Activated B cell treated with CpG ODN at 0.5 μM for 24 hours (primary cell): ENCODE measurements at regions of chr4 and their contacts with region 1.

Region 1: DNA sequence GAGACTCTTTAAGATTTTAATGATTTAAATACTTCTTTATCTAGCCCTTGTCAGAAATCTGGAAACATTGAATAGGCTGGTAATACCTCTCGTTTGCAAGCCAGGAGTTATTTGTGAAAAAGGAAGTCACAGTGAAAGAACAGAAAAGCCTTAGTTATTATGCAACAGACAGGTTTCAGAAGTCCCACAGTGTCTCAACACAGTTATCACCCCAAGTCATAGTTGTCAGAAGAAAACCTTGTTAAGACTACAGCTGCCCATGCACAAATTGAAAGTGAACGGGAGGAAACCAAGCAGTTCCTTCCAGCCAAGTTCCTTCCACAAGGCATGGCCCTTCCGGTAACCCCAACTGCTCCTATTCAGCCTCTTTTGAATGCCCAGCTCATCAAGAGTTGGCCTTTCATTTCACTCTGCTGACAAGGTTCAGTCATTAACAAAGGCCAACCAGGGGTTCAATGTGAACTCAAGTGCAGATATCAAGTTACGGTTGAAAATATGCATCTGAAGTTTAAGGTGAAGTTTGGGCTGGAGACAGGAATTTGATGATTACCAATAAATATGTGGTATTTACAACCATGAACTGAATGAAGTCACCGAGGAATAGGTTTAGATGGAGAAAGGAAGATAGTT is 15.6 kb downstream of the ALPK1 start:
- DNase-seq: no peak
- ATAC-seq: peak; percentile 87
- H3K4me3 Mint-ChIP-seq: no peak overlapping the region
- H3K27ac Mint-ChIP-seq: no peak overlapping the region
- H3K4me1 Mint-ChIP-seq: peaks cover 19% of the 10 kb centered on the region
- H3K27me3 Mint-ChIP-seq: no peaks in the 10 kb centered on the region
- CTCF ChIP-seq: no peak

Region 2: DNA sequence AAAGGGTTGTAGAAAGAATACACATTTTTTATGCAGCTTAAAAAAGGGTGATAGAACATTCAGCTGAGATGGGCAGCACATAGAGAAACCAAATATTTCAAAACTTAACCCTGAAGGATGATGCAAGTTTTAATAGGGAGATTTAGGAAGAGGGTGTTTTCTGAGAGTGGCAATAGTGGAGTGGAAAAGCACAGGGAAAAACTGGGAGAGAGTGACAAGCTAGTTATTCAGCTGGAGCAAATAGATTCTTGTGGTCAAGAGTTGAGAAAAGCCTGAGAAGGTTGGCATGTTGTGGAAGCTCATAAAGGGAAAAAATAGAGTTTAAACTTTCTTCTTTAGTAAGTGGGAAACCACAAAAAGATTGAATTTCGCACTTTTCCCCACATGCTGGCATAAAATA is 1330.2 kb before region 1 on chr4:
- CTCF ChIA-PET with region 1: no interaction called
- POLR2A ChIA-PET with region 1: no interaction called
- intact Hi-C with region 1: no loop called
- DNase-seq: no peak
- ATAC-seq: no peak
- H3K4me3 Mint-ChIP-seq: no peak overlapping the region
- H3K27ac Mint-ChIP-seq: no peak overlapping the region
- H3K4me1 Mint-ChIP-seq: no peaks in the 10 kb centered on the region
- H3K27me3 Mint-ChIP-seq: no peaks in the 10 kb centered on the region
- CTCF ChIP-seq: no peak

Region 3: DNA sequence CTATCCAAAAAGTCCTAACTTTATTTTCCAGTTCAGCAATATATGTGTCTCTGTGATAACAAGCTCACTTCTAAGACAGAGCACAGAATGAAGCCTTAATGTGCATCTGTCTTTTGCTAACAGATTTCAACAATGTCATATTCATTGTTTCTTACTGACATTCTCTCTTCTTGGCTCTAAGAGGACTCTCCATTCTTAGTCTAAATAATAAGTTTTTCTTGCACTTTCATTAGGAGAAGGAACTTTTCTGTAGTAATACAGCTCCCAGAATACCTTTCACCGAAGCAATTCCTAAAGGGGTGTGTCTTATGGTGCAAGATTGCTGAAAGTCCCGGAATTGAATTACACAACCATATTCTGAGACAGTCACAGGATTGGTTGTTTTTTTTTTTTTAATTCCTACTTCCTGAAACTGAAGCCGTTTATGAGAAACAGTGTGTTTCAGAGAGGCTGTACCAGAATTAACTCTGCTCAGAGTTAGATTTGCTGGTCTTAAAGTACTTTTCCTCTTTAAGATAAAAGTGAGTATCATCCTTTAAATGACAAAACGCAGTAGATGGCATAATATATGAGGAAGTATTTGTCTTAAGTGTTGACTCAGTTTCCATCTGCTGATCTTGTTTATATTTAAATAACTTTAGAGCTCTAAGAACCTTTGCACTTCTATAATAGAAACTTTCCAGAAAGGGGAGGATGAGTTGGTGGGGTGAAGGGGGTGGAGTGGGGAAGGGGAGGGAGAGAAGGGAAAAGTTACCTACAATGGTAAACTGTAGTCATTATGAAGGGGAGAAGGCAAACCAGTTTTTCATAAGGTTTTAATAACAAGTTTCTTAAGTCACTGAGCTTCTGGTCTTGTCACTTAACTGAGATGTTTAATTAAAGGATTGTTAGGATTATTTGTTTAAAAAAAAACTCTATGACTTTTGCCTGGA is 15.5 kb before region 1 on chr4 and contains the start of gene ALPK1:
- CTCF ChIA-PET with region 1: no interaction called
- POLR2A ChIA-PET with region 1: interaction called, 7 read pairs
- intact Hi-C with region 1: loop called (anchors 1 kb)
- DNase-seq: no peak
- ATAC-seq: peak; percentile 94
- H3K4me3 Mint-ChIP-seq: peak within 1 kb of the TSS; percentile 85
- H3K27ac Mint-ChIP-seq: peak within 1 kb of the TSS; percentile 85
- H3K4me1 Mint-ChIP-seq: peaks cover 23% of the 10 kb centered on the region
- H3K27me3 Mint-ChIP-seq: no peaks in the 10 kb centered on the region
- CTCF ChIP-seq: no peak
- total RNA-seq, gene ALPK1: 23.1 and 26.7 TPM in 2 replicates

Region 4: DNA sequence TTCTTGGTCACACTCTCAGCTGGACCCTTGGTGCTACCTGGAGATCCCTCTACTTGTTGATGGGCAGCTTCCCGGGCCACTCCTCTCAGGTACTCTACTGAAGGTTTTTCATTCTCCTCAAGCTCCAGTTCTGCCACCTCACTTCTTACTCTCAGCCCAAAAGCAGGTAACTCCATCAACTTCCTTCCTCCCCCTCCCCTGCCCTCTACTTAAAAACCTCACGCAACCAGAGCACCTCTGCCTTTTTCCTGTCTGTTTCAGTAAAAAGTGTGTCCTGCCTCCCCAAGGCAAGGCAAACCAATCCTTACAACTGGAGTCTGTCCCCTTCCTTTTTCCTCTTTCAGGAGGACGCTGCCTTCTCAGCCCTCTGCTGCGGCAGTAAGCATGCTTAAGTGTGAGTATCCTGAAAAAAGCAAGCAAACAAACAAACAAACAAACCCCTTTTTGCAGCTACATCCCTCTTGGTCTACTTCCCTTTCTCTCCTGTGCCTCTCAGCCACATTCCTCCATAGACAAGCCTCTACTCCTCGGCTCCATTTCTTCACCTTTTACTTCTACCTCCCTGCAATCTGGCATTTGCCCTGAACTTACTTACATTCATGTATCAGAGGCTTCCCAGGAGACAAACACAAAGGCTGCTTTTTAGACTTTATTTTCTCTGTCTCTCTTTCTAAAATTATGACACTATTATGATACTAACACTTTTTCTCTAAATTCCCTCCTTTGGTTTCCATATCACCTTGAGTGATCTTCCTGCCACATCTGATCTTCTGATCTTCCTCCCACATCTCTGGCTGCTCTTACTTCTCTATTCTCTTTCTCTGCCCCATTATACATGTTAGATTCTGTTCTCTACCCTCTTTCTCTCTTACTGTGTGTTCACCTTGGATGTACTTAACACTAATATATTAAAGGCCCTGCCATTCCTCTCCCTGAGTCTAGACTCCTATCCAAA is 10.1 kb before region 1 on chr4:
- CTCF ChIA-PET with region 1: no interaction called
- POLR2A ChIA-PET with region 1: interaction called, 7 read pairs
- intact Hi-C with region 1: loop called (anchors 1 kb)
- DNase-seq: no peak
- ATAC-seq: no peak
- H3K4me3 Mint-ChIP-seq: no peak overlapping the region
- H3K27ac Mint-ChIP-seq: no peak overlapping the region
- H3K4me1 Mint-ChIP-seq: peaks cover 23% of the 10 kb centered on the region
- H3K27me3 Mint-ChIP-seq: no peaks in the 10 kb centered on the region
- CTCF ChIP-seq: no peak

Region 5: GRCh38 chr4:112517911-112518310 is 205.2 kb after region 1 on chr4:
- CTCF ChIA-PET with region 1: no interaction called
- POLR2A ChIA-PET with region 1: no interaction called
- intact Hi-C with region 1: no loop called
- DNase-seq: no peak
- ATAC-seq: no peak
- H3K4me3 Mint-ChIP-seq: peak overlapping the region; percentile 70
- H3K27ac Mint-ChIP-seq: no peak overlapping the region
- H3K4me1 Mint-ChIP-seq: peaks cover 58% of the 10 kb centered on the region
- H3K27me3 Mint-ChIP-seq: peaks cover 79% of the 10 kb centered on the region
- CTCF ChIP-seq: no peak